Activated naive CD4-positive, alpha-beta T cell treated with anti-CD3 and anti-CD28 coated beads, Interleukin-2, amount 10 ng/mL, durations not matched to agents 7 days and 5 days (primary cell): ENCODE measurements at regions of chr7 and their contacts with region 1.

Region 1: DNA sequence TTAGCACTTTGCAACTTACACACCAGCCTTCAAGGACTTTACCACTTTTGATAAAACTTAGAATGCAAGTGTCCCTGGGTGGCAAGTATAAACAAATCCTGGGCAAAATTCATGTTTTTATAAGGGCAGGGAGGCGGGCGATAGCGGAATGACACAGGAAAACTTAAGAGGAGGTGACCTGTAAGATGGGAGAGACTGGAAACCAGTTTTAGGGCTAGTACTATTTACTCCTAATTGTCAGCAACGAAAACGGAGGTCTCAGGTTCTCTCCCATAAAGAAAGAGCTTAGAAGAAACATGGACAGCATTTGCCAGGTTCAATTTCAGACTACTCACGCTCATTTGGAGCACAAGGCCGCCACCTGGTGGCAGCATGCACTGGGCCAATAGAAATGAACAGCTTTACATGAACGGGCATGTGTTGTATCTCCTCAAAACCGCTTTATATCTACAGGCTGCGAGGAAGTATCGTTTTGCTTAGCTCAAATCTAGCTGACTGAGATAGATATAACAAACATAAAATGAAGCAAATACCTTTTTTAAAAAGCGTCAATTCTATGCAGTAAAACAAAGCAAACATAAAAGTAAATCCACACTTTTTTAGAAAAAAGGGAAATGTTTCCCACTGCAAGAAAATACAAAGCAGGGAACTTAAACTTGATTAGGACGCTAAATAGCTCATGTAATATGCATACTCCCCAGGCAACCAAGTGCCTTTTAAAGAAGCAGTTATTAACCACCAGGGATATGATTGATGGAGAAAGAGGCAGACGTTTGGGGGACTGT is 37.6 kb upstream of the SVOPL start:
- DNase-seq: peak; percentile 91
- H3K4me3 Mint-ChIP-seq: no peak overlapping the region
- H3K27ac Mint-ChIP-seq: no peak overlapping the region
- H3K4me1 Mint-ChIP-seq: peaks cover 11% of the 10 kb centered on the region
- H3K27me3 Mint-ChIP-seq: peaks cover 4% of the 10 kb centered on the region

Region 2: GRCh38 chr7:138161600-138162081 is 577.1 kb before region 1 on chr7:
- CTCF ChIA-PET with region 1: interaction called, 33 read pairs
- DNase-seq: peak; percentile 83
- H3K4me3 Mint-ChIP-seq: no peak overlapping the region
- H3K27ac Mint-ChIP-seq: no peak overlapping the region
- H3K4me1 Mint-ChIP-seq: no peaks in the 10 kb centered on the region
- H3K27me3 Mint-ChIP-seq: no peaks in the 10 kb centered on the region

Region 3: GRCh38 chr7:138449580-138449979 is 289.2 kb before region 1 on chr7:
- CTCF ChIA-PET with region 1: interaction called, 17 read pairs
- DNase-seq: peak; percentile 49
- H3K4me3 Mint-ChIP-seq: no peak overlapping the region
- H3K27ac Mint-ChIP-seq: no peak overlapping the region
- H3K4me1 Mint-ChIP-seq: no peaks in the 10 kb centered on the region
- H3K27me3 Mint-ChIP-seq: peaks cover 8% of the 10 kb centered on the region

Region 4: DNA sequence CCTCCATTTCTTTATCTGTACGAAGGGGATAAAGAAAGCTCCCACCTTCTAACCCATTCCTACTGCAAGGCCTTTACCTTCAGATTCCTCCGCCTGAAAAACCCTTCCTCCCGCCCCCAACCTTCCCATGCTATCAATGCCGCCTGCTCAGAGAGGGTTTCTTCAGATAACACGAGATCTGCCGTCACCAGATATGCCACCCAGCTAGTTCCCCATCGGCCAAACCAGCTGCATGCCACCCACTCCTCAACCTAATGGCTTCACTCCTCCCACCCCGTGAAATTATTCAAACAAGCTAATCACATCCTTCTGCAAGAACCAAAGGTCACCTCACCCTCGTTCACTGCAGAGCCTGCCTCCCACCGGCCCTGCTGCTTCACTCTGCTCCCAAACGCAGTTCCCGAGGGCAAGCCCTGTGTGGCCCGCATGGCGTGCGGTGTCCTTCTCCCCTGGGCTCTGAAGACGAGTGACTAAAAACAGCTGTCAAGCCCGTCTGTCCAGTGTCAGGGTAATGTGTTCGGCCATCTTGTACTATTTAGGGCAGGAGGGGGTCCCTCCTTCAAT is 12.2 kb after region 1 on chr7:
- CTCF ChIA-PET with region 1: interaction called, 14 read pairs
- DNase-seq: no peak
- H3K4me3 Mint-ChIP-seq: no peak overlapping the region
- H3K27ac Mint-ChIP-seq: peak overlapping the region; percentile 58
- H3K4me1 Mint-ChIP-seq: peaks cover 70% of the 10 kb centered on the region
- H3K27me3 Mint-ChIP-seq: no peaks in the 10 kb centered on the region